CD4-positive, alpha-beta memory T cell (primary cell): ENCODE measurements at regions of chr9 and their contacts with region 1.

Region 1: GRCh38 chr9:99104459-99105151 is at the start of gene TGFBR1:
- DNase-seq: peak; percentile 90 to 96 (median 92)
- H3K4me3 ChIP-seq: peak within 1 kb of the TSS; percentile 40 to 62
- H3K4me3 Mint-ChIP-seq: peak within 1 kb of the TSS; percentile 87 to 96 (median 91)
- H3K27ac ChIP-seq: peak within 1 kb of the TSS; percentile 70
- H3K27ac Mint-ChIP-seq: peak within 1 kb of the TSS; percentile 87 to 95 (median 92)
- H3K4me1 ChIP-seq: peaks cover 57% of the 10 kb centered on the region
- H3K4me1 Mint-ChIP-seq: peaks cover 45 to 65% (median 58%) of the 10 kb centered on the region in 4 donors
- H3K27me3 ChIP-seq: no peaks in the 10 kb centered on the region
- H3K27me3 Mint-ChIP-seq: no peaks in the 10 kb centered on the region
- total RNA-seq, gene TGFBR1: 26.4 to 27.4 TPM

Region 2: GRCh38 chr9:98998441-98999151 is 106.0 kb before region 1 on chr9:
- CTCF ChIA-PET with region 1: interaction called, 38 read pairs
- POLR2A ChIA-PET with region 1: interaction called, 3 read pairs
- intact Hi-C with region 1: loop called (anchors 1 kb)
- DNase-seq: peak; percentile 32 to 52 (median 40)
- H3K4me3 ChIP-seq: no peak overlapping the region
- H3K4me3 Mint-ChIP-seq: no peak overlapping the region
- H3K27ac ChIP-seq: no peak overlapping the region
- H3K27ac Mint-ChIP-seq: no peak overlapping the region
- H3K4me1 ChIP-seq: peaks cover 16% of the 10 kb centered on the region
- H3K4me1 Mint-ChIP-seq: peaks cover 15 to 25% (median 16%) of the 10 kb centered on the region in 4 donors
- H3K27me3 ChIP-seq: no peaks in the 10 kb centered on the region
- H3K27me3 Mint-ChIP-seq: peaks cover 0 to 5% of the 10 kb centered on the region in 2 donors

Region 3: DNA sequence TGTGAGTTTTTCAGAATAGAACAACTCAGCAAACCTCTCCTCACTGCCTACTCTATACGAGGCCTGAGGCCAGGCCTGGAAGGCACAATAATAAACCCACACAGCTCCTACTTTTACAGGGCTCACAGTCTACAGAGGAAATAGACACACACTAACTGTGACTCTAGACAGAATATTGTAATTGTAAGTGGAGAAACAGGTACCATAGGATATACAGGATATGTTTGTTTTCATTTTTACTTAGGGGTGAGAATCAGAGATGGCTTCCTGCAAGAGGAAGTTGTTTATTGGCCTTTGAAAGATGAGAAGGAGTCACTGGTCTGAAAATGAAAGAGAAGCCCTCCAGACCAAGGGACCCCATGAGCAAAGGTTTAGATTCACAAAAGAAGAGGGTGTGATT is 35.5 kb before region 1 on chr9:
- CTCF ChIA-PET with region 1: no interaction called
- POLR2A ChIA-PET with region 1: interaction called, 12 read pairs
- intact Hi-C with region 1: no loop called
- DNase-seq: no peak
- H3K4me3 ChIP-seq: no peak overlapping the region
- H3K4me3 Mint-ChIP-seq: peak overlapping the region in 6 of 8 donors; percentile 12 to 73 (median 54)
- H3K27ac ChIP-seq: no peak overlapping the region
- H3K27ac Mint-ChIP-seq: peak overlapping the region; percentile 41 to 92 (median 81)
- H3K4me1 ChIP-seq: peaks cover 18% of the 10 kb centered on the region
- H3K4me1 Mint-ChIP-seq: peaks cover 27 to 75% (median 47%) of the 10 kb centered on the region in 4 donors
- H3K27me3 ChIP-seq: no peaks in the 10 kb centered on the region
- H3K27me3 Mint-ChIP-seq: no peaks in the 10 kb centered on the region

Region 4: GRCh38 chr9:99092643-99093491 is 11.7 kb before region 1 on chr9:
- CTCF ChIA-PET with region 1: interaction called, 6 read pairs
- POLR2A ChIA-PET with region 1: interaction called, 31 read pairs
- intact Hi-C with region 1: no loop called
- DNase-seq: peak in 1 of 5 donors; percentile 21
- H3K4me3 ChIP-seq: no peak overlapping the region
- H3K4me3 Mint-ChIP-seq: peak overlapping the region; percentile 63 to 86 (median 78)
- H3K27ac ChIP-seq: no peak overlapping the region
- H3K27ac Mint-ChIP-seq: peak overlapping the region; percentile 1 to 84 (median 60)
- H3K4me1 ChIP-seq: peaks cover 35% of the 10 kb centered on the region
- H3K4me1 Mint-ChIP-seq: peaks cover 26 to 57% (median 38%) of the 10 kb centered on the region in 4 donors
- H3K27me3 ChIP-seq: no peaks in the 10 kb centered on the region
- H3K27me3 Mint-ChIP-seq: no peaks in the 10 kb centered on the region

Region 5: DNA sequence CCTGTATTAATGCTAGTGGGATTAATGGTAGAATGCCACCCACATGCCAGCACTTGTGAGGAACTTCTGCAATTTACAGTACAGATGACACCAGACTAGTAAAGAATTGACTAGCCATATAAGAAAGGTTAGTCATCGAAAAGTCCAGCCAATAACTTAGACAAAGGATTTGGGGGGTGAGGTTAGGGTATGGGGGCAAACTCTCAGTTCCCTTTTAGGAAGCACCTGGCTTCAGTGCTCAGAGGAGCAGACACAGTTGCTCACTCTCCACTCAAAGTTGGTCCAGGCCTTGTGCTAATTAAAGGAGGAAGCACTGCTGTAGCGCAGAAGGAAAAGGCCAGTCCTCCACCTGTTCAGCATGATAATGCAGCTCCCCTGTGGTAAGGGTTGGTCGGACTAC is 25.5 kb after region 1 on chr9:
- CTCF ChIA-PET with region 1: interaction called, 71 read pairs
- POLR2A ChIA-PET with region 1: interaction called, 15 read pairs
- intact Hi-C with region 1: loop called (anchors 5 kb)
- DNase-seq: no peak
- H3K4me3 ChIP-seq: no peak overlapping the region
- H3K4me3 Mint-ChIP-seq: peak overlapping the region in 1 of 8 donors; percentile 38
- H3K27ac ChIP-seq: no peak overlapping the region
- H3K27ac Mint-ChIP-seq: peak overlapping the region in 2 of 7 donors; percentile 12 to 63
- H3K4me1 ChIP-seq: peaks cover 82% of the 10 kb centered on the region
- H3K4me1 Mint-ChIP-seq: peaks cover 58 to 91% (median 76%) of the 10 kb centered on the region in 4 donors
- H3K27me3 ChIP-seq: no peaks in the 10 kb centered on the region
- H3K27me3 Mint-ChIP-seq: no peaks in the 10 kb centered on the region

Region 6: GRCh38 chr9:99221621-99222415 is 117.2 kb after region 1 on chr9 and contains the starts of genes ALG2 and SEC61B:
- CTCF ChIA-PET with region 1: interaction called, 3 read pairs
- POLR2A ChIA-PET with region 1: no interaction called
- intact Hi-C with region 1: loop called (anchors 2 kb)
- DNase-seq: peak; percentile 92 to 95 (median 93)
- H3K4me3 ChIP-seq: peak within 1 kb of the TSS; percentile 57 to 78
- H3K4me3 Mint-ChIP-seq: peak within 1 kb of the TSS; percentile 95 to 100 (median 98)
- H3K27ac ChIP-seq: peak within 1 kb of the TSS; percentile 82
- H3K27ac Mint-ChIP-seq: peak within 1 kb of the TSS; percentile 99 to 100 (median 100)
- H3K4me1 ChIP-seq: peaks cover 54% of the 10 kb centered on the region
- H3K4me1 Mint-ChIP-seq: peaks cover 51 to 93% (median 74%) of the 10 kb centered on the region in 4 donors
- H3K27me3 ChIP-seq: no peaks in the 10 kb centered on the region
- H3K27me3 Mint-ChIP-seq: no peaks in the 10 kb centered on the region
- total RNA-seq, gene ALG2: 39.1 to 39.8 TPM
- total RNA-seq, gene SEC61B: 101 to 106 TPM